MCF 10A (cell line): ENCODE measurements at regions of chr11 and their contacts with region 1.

Region 1: DNA sequence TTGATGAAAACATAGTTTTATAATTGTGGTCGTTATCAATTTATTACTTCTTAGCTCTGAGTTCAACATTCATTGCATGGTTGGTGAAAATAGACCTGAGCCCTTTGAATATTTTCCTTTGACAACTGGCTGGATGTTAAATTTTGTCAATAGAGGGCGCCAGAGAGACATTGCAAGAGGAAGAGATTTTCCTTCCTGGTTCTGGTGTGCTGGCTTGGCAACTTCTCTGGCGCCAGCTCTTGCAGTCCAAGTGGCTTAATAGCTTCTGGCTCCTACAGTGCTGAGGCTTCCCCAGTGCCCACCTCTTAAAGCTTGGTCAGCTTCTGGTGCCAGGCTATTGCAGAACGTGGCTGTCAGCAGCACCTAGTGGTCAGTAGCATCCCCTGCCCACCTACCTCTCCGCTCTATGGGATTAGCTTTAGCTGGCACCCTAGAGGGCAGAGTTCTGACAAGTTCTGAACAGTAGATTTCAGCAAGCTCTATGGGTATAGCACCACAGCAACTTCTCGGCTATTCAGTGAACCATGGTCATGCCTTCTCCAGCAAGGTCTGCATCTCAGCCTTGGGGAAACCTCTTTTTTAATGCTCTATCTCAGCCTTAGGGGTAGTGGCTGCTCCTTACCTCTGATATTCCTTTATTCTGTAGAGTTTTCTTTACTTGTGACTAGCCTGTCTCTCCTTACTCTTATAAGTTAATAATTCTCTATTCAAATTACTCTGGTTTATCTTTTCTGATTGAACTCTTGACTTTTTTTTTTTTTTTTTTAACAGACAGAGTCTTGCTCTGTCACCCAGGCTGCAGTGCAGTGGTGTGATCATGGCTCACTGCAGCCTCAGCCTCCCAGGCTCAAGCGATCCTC is 59.4 kb downstream of the ACER3 start:
- DNase-seq: peak; percentile 82
- H3K4me3 Mint-ChIP-seq: no peak overlapping the region
- H3K27ac Mint-ChIP-seq: no peak overlapping the region
- H3K4me1 Mint-ChIP-seq: no peaks in the 10 kb centered on the region
- H3K27me3 Mint-ChIP-seq: no peaks in the 10 kb centered on the region
- CTCF ChIP-seq: peak; percentile 79

Region 2: GRCh38 chr11:76788661-76789439 is 131.3 kb before region 1 on chr11:
- CTCF ChIA-PET with region 1: interaction called, 12 read pairs
- POLR2A ChIA-PET with region 1: interaction called, 6 read pairs
- intact Hi-C with region 1: no loop called
- DNase-seq: peak; percentile 94
- H3K4me3 Mint-ChIP-seq: peak overlapping the region; percentile 51
- H3K27ac Mint-ChIP-seq: peak overlapping the region; percentile 69
- H3K4me1 Mint-ChIP-seq: peaks cover 84% of the 10 kb centered on the region
- H3K27me3 Mint-ChIP-seq: no peaks in the 10 kb centered on the region
- CTCF ChIP-seq: no peak

Region 3: GRCh38 chr11:76823481-76824078 is 96.5 kb before region 1 on chr11:
- CTCF ChIA-PET with region 1: interaction called, 19 read pairs
- POLR2A ChIA-PET with region 1: interaction called, 4 read pairs
- intact Hi-C with region 1: no loop called
- DNase-seq: peak; percentile 97
- H3K4me3 Mint-ChIP-seq: peak overlapping the region; percentile 51
- H3K27ac Mint-ChIP-seq: peak overlapping the region; percentile 67
- H3K4me1 Mint-ChIP-seq: peaks cover 27% of the 10 kb centered on the region
- H3K27me3 Mint-ChIP-seq: no peaks in the 10 kb centered on the region
- CTCF ChIP-seq: no peak

Region 4: DNA sequence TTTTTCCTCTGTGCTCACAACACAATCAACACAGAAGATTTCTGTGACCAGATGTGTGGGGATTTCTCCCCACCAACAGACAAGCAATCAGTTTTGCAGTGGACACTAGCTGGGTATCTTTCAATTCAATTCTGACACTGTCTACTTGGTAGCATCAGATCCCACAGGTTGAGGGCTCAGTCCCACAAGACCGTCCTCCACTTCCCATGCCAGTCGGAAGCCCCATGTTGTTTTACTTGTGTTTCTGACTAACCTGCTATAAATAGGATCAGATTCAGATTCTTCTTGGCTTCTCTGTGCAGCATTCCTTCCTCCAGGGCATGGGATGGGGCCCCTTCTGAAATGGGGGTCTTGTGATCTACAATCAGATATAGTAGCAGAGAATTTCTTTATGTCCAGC is 39.8 kb before region 1 on chr11:
- CTCF ChIA-PET with region 1: interaction called, 10 read pairs
- POLR2A ChIA-PET with region 1: no interaction called
- intact Hi-C with region 1: no loop called
- DNase-seq: no peak
- H3K4me3 Mint-ChIP-seq: no peak overlapping the region
- H3K27ac Mint-ChIP-seq: no peak overlapping the region
- H3K4me1 Mint-ChIP-seq: peaks cover 4% of the 10 kb centered on the region
- H3K27me3 Mint-ChIP-seq: no peaks in the 10 kb centered on the region
- CTCF ChIP-seq: no peak

Region 5: DNA sequence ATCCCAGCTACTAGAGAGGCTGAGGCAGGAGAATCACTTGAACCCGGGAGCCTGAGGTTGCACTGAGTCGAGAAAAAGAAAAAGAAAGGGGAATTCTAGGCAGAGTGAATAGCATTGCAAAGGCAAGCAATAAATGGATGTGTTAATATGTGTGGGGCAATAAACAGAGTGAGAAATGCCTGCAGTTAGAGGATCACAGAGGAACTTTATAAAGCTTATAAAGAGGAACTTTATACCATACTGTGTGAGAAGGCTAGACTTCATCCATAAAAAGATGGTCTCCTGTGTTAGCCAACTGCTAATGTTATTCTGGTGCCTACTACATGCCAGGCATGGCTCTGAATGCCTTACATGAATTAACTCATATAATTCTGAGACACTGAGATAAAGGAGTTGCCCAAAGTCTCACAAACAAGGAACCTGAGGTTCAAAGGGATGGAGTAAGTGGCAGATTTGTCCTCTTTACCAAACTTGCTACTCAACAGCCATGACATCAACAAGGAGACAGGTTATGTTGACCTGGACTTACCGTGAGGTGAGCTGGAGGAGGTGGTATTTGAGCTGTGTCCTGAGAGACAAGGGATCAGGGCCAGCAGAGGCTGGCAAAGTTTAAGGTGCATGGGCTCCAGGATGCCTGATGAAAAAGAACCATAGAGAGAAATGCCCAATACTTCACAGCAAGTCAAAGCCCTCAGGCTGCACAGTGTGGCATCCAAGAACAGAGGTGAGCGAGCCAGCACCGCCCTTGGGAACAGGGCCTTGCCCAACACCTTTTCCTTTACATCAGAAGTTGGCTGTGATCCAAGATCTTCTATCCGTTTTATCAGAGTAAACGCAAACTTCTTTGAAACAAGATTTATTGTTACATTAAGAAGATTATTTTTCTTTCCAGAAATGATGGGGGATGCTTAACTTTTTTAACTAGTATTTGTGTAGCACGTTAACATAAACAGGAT is 115.2 kb after region 1 on chr11:
- CTCF ChIA-PET with region 1: interaction called, 18 read pairs
- POLR2A ChIA-PET with region 1: no interaction called
- intact Hi-C with region 1: no loop called
- DNase-seq: peak; percentile 91
- H3K4me3 Mint-ChIP-seq: no peak overlapping the region
- H3K27ac Mint-ChIP-seq: no peak overlapping the region
- H3K4me1 Mint-ChIP-seq: peaks cover 7% of the 10 kb centered on the region
- H3K27me3 Mint-ChIP-seq: peaks cover 15% of the 10 kb centered on the region
- CTCF ChIP-seq: no peak